Upper lobe of right lung (tissue), 1 donor: ENCODE measurements at regions of chr4 and their contacts with region 1.

Region 1: GRCh38 chr4:110516106-110516922 is 40.4 kb downstream of the ENPEP start:
- DNase-seq: peak; percentile 73
- ATAC-seq: peak; percentile 99
- H3K4me3 ChIP-seq: peak overlapping the region; percentile 52
- H3K27ac ChIP-seq: peak overlapping the region; percentile 44
- H3K4me1 ChIP-seq: no peaks in the 10 kb centered on the region
- H3K27me3 ChIP-seq: no peaks in the 10 kb centered on the region
- CTCF ChIP-seq: peak; percentile 78

Region 2: DNA sequence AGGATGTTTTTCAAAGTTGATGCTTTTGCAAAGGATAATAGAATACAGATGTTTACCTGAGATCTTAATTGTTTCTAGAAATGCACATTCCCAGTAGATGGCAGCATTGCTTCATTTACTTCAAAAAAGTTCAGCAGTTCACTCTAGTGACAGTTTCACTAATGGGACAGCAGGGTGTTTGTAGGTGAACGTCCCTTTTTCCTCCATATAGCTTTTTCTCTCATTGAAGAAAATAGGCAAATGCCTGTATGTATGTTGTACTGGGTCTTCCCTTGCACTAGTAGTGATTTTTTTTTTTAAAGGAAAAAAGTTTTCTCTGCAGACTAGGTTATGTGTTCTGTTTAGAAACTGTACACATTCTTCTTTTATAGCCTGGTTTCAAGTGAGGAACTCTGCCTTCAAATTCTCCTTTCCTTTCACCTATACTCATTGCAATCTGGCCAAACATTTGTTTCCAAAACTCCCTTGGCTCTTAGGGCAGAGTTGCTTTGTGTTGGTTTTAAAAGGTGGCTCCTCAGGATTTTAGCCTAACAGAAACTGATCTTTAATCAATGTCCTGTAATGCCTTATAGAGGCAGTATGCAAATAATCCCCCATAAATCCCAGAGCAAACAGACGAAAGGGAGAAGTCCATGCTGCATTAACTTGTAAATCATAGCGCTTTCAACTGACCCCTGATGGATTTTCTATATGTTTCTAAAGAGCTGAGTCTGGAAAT is 517.3 kb before region 1 on chr4:
- intact Hi-C with region 1: loop called (anchors 5 kb)
- DNase-seq: no peak
- ATAC-seq: peak; percentile 80
- H3K4me3 ChIP-seq: no peak overlapping the region
- H3K27ac ChIP-seq: no peak overlapping the region
- H3K4me1 ChIP-seq: no peaks in the 10 kb centered on the region
- H3K27me3 ChIP-seq: no peaks in the 10 kb centered on the region
- CTCF ChIP-seq: peak; percentile 62

Region 3: DNA sequence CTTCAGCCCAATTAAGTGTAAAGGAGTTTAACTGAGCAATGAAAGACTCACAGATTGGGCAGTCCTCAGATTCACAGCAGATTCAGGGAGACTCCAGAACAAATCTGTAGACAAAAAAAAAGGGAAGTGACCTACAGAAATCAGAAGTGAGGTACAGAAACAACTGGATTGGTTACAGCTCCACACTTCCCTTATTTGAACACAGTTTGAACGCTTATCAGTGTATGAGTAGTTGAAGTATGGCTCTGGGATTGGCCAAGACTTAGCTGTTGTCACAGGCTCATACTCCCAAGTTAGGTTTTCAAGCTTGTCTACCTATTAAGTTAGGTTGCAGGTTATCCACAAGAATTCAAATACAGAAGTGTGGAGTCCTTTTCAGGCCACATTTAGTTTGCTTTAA is 205.5 kb before region 1 on chr4:
- intact Hi-C with region 1: loop called (anchors 10 kb)
- DNase-seq: no peak
- ATAC-seq: peak; percentile 43
- H3K4me3 ChIP-seq: no peak overlapping the region
- H3K27ac ChIP-seq: no peak overlapping the region
- H3K4me1 ChIP-seq: no peaks in the 10 kb centered on the region
- H3K27me3 ChIP-seq: no peaks in the 10 kb centered on the region
- CTCF ChIP-seq: no peak

Region 4: GRCh38 chr4:111031001-111031579 is 514.8 kb after region 1 on chr4:
- intact Hi-C with region 1: no loop called
- DNase-seq: no peak
- ATAC-seq: no peak
- H3K4me3 ChIP-seq: no peak overlapping the region
- H3K27ac ChIP-seq: no peak overlapping the region
- H3K4me1 ChIP-seq: no peaks in the 10 kb centered on the region
- H3K27me3 ChIP-seq: no peaks in the 10 kb centered on the region
- CTCF ChIP-seq: no peak